Heart right ventricle (tissue), 16 donors: ENCODE measurements at regions of chr12 and their contacts with region 1.

Region 1: GRCh38 chr12:15505616-15506015 is 183.3 kb downstream of the PTPRO start:
- DNase-seq: no peak
- ATAC-seq: no peak
- H3K4me3 ChIP-seq: no peak overlapping the region
- H3K27ac ChIP-seq: no peak overlapping the region
- H3K4me1 ChIP-seq: no peaks in the 10 kb centered on the region
- H3K27me3 ChIP-seq: peaks cover 0 to 55% (median 8%) of the 10 kb centered on the region in 7 donors
- CTCF ChIP-seq: no peak

Region 2: GRCh38 chr12:15293731-15294130 is 211.9 kb before region 1 on chr12:
- intact Hi-C with region 1: loop called in 1 of 10 experiments (anchors 10 kb)
- DNase-seq: no peak
- ATAC-seq: no peak
- H3K4me3 ChIP-seq: no peak overlapping the region
- H3K27ac ChIP-seq: no peak overlapping the region
- H3K4me1 ChIP-seq: no peaks in the 10 kb centered on the region
- H3K27me3 ChIP-seq: no peaks in the 10 kb centered on the region
- CTCF ChIP-seq: no peak

Region 3: GRCh38 chr12:15474766-15475165 is 30.9 kb before region 1 on chr12:
- intact Hi-C with region 1: no loop called
- DNase-seq: no peak
- ATAC-seq: no peak
- H3K4me3 ChIP-seq: no peak overlapping the region
- H3K27ac ChIP-seq: no peak overlapping the region
- H3K4me1 ChIP-seq: no peaks in the 10 kb centered on the region
- H3K27me3 ChIP-seq: peaks cover 0 to 19% (median 0%) of the 10 kb centered on the region in 7 donors
- CTCF ChIP-seq: no peak